HepG2 (cell line): ENCODE measurements at regions of chr15 and their contacts with region 1.

Region 1: GRCh38 chr15:92683232-92683834 is 27.8 kb upstream of the FAM174B start:
- DNase-seq: peak; percentile 50
- ATAC-seq: peak; percentile 97
- H3K4me3 ChIP-seq: no peak overlapping the region
- H3K27ac ChIP-seq: no peak overlapping the region
- H3K4me1 ChIP-seq: no peaks in the 10 kb centered on the region
- H3K27me3 ChIP-seq: no peaks in the 10 kb centered on the region
- CTCF ChIP-seq: peak; percentile 82
- EP300 ChIP-seq: no peak
- POLR2A ChIP-seq: no peak
- RAD21 ChIP-seq: peak; percentile 87

Region 2: DNA sequence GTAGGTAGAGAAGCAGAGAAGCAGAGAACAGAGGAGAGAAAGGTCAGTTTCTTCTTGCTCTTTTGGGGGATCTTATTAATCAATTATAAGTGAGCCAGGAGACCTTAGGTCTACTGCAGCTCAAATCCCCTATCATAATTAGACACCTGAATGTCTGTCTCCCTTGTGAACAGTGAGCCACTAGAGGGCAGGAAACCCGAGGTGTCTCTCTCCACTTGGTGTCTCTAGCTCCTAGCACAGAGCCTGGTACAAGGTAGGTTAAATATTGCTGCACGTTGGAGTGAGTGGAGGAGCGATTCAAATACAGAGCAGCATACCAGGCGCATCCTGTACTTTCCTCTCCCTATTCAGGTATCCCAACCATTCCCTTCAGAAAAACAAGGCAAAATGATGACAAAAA is 291.7 kb before region 1 on chr15:
- CTCF ChIA-PET with region 1: no interaction called
- POLR2A ChIA-PET with region 1: no interaction called
- in situ Hi-C with region 1: no loop called
- intact Hi-C with region 1: loop called (anchors 1 kb)
- DNase-seq: peak; percentile 6
- ATAC-seq: peak; percentile 88
- H3K4me3 ChIP-seq: no peak overlapping the region
- H3K27ac ChIP-seq: no peak overlapping the region
- H3K4me1 ChIP-seq: no peaks in the 10 kb centered on the region
- H3K27me3 ChIP-seq: peaks cover 3 to 61% of the 10 kb centered on the region in 2 experiments; a peak in 4 of 5 replicates
- CTCF ChIP-seq: peak; percentile 24
- EP300 ChIP-seq: no peak
- POLR2A ChIP-seq: no peak
- RAD21 ChIP-seq: no peak

Region 3: DNA sequence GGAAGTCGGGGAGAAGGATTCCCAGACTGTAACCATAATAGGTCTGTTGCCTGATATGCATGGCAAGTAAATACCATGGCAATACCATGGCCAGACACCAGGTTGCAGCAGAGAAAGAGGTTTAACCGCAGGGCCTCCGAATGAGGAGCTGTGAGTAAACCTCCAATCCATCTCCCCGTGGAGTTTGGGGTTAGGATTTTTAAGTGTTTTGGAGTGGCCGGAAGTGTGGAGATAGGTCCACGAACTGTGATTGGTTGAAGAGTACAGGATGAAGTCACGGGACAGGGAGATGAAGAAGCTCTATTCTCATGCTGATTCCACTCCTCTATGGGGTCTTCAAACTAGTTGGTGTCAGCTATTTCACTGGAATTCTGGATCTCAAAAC is 161.7 kb before region 1 on chr15:
- CTCF ChIA-PET with region 1: interaction called, 43 read pairs
- POLR2A ChIA-PET with region 1: no interaction called
- in situ Hi-C with region 1: loop called (anchors 5 kb)
- intact Hi-C with region 1: no loop called
- DNase-seq: peak; percentile 51
- ATAC-seq: peak; percentile 96
- H3K4me3 ChIP-seq: no peak overlapping the region
- H3K27ac ChIP-seq: no peak overlapping the region
- H3K4me1 ChIP-seq: no peaks in the 10 kb centered on the region
- H3K27me3 ChIP-seq: no peaks in the 10 kb centered on the region
- CTCF ChIP-seq: peak; percentile 80
- EP300 ChIP-seq: no peak
- POLR2A ChIP-seq: no peak
- RAD21 ChIP-seq: peak; percentile 66